CD14-positive monocyte (primary cell): ENCODE measurements at regions of chr1 and their contacts with region 1.

Region 1: GRCh38 chr1:103106426-103107341 is 1.6 kb downstream of the COL11A1 start:
- DNase-seq: peak in 1 of 3 donors; percentile 2
- H3K4me3 ChIP-seq: no peak overlapping the region
- H3K4me3 Mint-ChIP-seq: peak overlapping the region in 1 of 2 donors; percentile 75
- H3K27ac ChIP-seq: no peak overlapping the region
- H3K27ac Mint-ChIP-seq: no peak overlapping the region
- H3K4me1 ChIP-seq: no peaks in the 10 kb centered on the region
- H3K4me1 Mint-ChIP-seq: peaks cover 6% of the 10 kb centered on the region
- H3K27me3 ChIP-seq: peaks cover 28 to 37% of the 10 kb centered on the region in 2 donors
- H3K27me3 Mint-ChIP-seq: peaks cover 22 to 36% (median 34%) of the 10 kb centered on the region in 3 donors
- CTCF ChIP-seq: peak; percentile 15

Region 2: DNA sequence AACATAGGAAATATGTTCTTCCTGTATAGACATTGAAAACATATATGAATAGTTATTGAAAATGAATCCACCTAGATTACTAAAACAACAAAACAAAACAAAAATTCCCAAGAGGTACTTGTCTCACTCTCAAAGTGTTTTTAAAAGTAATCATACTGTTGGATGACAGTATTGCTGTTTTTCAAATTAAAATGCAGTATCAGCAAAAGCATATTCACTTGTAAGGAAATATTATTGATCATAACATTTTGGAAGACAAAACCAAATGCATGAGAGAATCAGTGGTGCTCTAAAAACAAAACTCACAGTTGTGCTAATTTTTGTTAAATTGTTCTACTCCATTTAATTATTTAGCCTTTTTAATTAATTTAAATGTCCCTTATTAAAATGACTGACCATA is 129.4 kb before region 1 on chr1:
- intact Hi-C with region 1: no loop called
- DNase-seq: no peak
- H3K4me3 ChIP-seq: no peak overlapping the region
- H3K4me3 Mint-ChIP-seq: no peak overlapping the region
- H3K27ac ChIP-seq: no peak overlapping the region
- H3K27ac Mint-ChIP-seq: no peak overlapping the region
- H3K4me1 ChIP-seq: no peaks in the 10 kb centered on the region
- H3K4me1 Mint-ChIP-seq: no peaks in the 10 kb centered on the region
- H3K27me3 ChIP-seq: no peaks in the 10 kb centered on the region
- H3K27me3 Mint-ChIP-seq: no peaks in the 10 kb centered on the region
- CTCF ChIP-seq: no peak

Region 3: DNA sequence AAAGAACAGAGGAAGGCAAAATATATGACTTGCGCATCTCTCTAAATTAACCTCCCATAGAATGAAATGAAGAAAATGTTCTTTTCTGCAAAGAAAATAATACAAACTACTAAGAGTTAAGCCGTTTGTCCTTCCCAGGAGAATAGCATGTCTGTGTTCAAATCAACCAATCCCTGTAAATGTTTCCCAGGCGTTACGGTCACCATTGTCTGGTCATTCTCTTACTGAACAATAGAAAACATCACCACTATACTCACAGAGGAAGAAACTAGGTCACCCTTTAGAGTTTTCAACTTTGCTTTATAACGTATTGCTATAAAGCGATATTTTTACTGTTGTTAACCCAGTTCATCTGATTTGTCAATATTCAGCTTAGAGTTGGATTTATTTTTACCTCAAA is 32.5 kb before region 1 on chr1:
- intact Hi-C with region 1: no loop called
- DNase-seq: no peak
- H3K4me3 ChIP-seq: no peak overlapping the region
- H3K4me3 Mint-ChIP-seq: no peak overlapping the region
- H3K27ac ChIP-seq: no peak overlapping the region
- H3K27ac Mint-ChIP-seq: no peak overlapping the region
- H3K4me1 ChIP-seq: no peaks in the 10 kb centered on the region
- H3K4me1 Mint-ChIP-seq: no peaks in the 10 kb centered on the region
- H3K27me3 ChIP-seq: no peaks in the 10 kb centered on the region
- H3K27me3 Mint-ChIP-seq: no peaks in the 10 kb centered on the region
- CTCF ChIP-seq: no peak

Region 4: GRCh38 chr1:103162360-103162759 is 55.7 kb after region 1 on chr1:
- intact Hi-C with region 1: no loop called
- DNase-seq: no peak
- H3K4me3 ChIP-seq: no peak overlapping the region
- H3K4me3 Mint-ChIP-seq: no peak overlapping the region
- H3K27ac ChIP-seq: no peak overlapping the region
- H3K27ac Mint-ChIP-seq: no peak overlapping the region
- H3K4me1 ChIP-seq: no peaks in the 10 kb centered on the region
- H3K4me1 Mint-ChIP-seq: no peaks in the 10 kb centered on the region
- H3K27me3 ChIP-seq: no peaks in the 10 kb centered on the region
- H3K27me3 Mint-ChIP-seq: no peaks in the 10 kb centered on the region
- CTCF ChIP-seq: no peak

Region 5: DNA sequence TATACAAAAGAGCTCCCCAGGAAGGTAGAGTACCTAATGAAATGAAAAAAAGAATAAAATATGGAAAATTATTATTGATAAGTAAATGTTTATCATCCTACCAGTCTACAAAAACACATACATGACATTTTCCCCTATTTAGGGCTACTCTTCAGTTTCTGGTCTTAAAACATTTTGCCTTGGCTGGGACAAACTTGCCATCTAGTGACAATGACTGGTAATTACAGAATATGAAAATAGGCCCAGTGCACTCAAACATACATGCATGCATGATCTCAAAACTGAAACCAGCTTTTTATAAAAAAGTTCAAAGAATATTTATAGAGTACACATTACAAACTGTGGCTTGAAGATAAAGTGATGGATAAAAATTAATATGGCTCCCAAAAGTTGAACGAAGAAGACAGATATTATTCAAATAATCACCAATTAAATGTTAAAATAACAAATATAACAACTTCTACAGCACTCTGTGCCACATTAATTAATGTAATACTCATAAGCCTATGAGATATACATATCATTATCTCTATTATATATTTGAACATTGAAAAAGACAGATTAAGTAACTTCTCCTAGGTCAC is 408.3 kb after region 1 on chr1:
- intact Hi-C with region 1: loop called in 1 of 2 experiments (anchors 10 kb)
- DNase-seq: peak; percentile 28 to 56 (median 47)
- H3K4me3 ChIP-seq: no peak overlapping the region
- H3K4me3 Mint-ChIP-seq: no peak overlapping the region
- H3K27ac ChIP-seq: no peak overlapping the region
- H3K27ac Mint-ChIP-seq: no peak overlapping the region
- H3K4me1 ChIP-seq: no peaks in the 10 kb centered on the region
- H3K4me1 Mint-ChIP-seq: peaks cover 4% of the 10 kb centered on the region
- H3K27me3 ChIP-seq: no peaks in the 10 kb centered on the region
- H3K27me3 Mint-ChIP-seq: no peaks in the 10 kb centered on the region
- CTCF ChIP-seq: peak; percentile 88